ENCODE measurements at regions of chr5 and their contacts with region 1.

Region 1: GRCh38 chr5:53262348-53262970 is 152.9 kb upstream of the MOCS2 start:
- DNase-seq: no peak
- ATAC-seq: peak; percentile 67

Region 2: GRCh38 chr5:53180991-53181390 is 81.5 kb before region 1 on chr5:
- intact Hi-C with region 1: no loop called
- DNase-seq: no peak
- ATAC-seq: no peak

Region 3: DNA sequence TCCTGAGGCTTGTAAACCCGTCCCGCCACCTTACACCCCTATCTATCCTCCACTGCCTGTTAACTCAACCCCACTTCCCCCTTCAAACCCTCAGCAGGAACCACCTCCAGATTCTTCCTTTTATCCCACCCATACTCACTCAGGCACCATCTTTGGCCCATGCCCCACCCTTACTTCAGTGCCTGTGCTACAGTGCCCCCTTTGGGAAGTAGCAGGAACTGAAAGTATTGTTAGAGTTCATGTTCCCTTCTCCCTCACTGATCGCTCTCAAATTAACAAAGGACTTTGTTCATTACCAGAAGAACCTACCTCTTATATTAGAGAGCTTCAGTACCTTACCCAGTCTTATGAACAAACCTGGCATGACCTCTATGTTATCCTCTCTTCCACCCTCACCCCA is 60.7 kb before region 1 on chr5:
- intact Hi-C with region 1: no loop called
- DNase-seq: no peak
- ATAC-seq: no peak

Region 4: DNA sequence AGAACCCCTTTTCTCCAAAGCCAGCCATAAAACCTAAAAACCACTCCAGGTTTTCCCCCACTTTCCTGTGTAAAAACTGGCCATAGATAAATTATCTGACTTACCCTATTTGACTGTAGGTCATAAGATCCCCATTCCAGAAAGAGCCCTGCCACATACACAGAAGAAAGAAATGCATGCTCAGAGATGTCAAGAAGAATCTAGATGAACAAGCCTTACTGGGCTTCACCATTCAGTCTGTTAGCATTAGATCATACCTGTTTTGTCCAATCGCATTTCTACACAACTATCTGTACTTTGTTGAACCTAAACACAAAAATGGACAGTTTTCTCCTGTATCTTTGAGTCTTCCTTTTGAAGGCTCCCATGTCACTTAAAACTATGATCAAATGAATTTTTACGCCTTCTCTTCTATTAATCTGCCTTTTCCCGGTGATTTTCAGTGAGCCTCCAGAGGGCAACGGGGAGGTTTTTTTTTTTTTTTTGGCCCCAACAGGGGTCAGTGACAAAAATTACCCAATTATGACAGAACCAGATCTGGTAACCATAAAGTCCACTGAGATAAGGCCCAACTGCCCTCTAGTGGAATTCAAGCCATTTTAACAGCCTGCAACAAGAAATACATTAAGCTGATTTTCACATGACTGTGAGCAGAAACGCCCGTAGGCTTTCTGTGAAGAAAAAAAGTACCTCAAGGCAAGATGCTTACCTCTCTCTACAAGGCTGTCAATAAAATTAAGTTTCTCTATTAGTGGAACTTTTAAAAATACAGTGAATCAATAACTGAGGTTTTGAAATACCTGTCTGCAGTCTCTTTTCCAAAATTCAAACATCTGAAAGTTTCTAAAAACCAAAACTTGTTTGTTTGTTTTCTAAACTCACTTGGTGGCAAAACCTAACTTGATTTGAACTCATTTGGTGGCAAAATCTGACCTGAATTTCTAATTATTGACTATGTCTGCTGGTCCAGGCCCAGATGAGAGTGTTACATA is 168.1 kb after region 1 on chr5:
- intact Hi-C with region 1: loop called (anchors 10 kb)
- DNase-seq: no peak
- ATAC-seq: peak; percentile 70

Region 5: DNA sequence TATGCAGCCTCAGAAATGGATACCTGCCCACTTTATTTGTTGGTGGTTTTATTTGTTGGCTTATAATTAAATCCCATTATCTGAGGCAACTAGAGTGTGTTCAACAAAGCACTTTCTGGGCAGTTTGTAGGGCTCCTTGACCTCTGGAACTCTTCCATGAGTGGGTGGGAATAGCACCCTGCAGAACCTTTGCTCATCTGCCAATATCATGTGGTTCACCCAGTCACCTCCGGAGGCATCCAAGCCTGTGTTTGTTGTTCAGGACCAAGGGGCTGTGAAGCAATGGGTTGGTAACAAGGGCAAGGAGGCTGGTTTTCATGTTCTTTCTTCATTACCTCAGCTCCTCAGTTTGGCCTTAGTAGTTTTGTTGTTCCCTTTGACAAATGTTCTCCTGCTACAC is 612.0 kb after region 1 on chr5:
- intact Hi-C with region 1: no loop called
- DNase-seq: no peak
- ATAC-seq: no peak